PC-9 (cell line): ENCODE measurements at regions of chr1 and their contacts with region 1.

Region 1: GRCh38 chr1:189811960-189812359 is 665.7 kb downstream of the BRINP3 start:
- DNase-seq: no peak
- H3K4me3 ChIP-seq: no peak overlapping the region
- H3K27ac ChIP-seq: no peak overlapping the region
- H3K4me1 ChIP-seq: no peaks in the 10 kb centered on the region
- H3K27me3 ChIP-seq: no peaks in the 10 kb centered on the region
- CTCF ChIP-seq: no peak

Region 2: GRCh38 chr1:189289346-189289745 is 522.6 kb before region 1 on chr1:
- CTCF ChIA-PET with region 1: no interaction called
- POLR2A ChIA-PET with region 1: interaction called, 12 read pairs
- intact Hi-C with region 1: no loop called
- DNase-seq: no peak
- H3K4me3 ChIP-seq: no peak overlapping the region
- H3K27ac ChIP-seq: no peak overlapping the region
- H3K4me1 ChIP-seq: no peaks in the 10 kb centered on the region
- H3K27me3 ChIP-seq: no peaks in the 10 kb centered on the region
- CTCF ChIP-seq: no peak

Region 3: GRCh38 chr1:189847613-189848012 is 35.7 kb after region 1 on chr1:
- CTCF ChIA-PET with region 1: no interaction called
- POLR2A ChIA-PET with region 1: no interaction called
- intact Hi-C with region 1: no loop called
- DNase-seq: no peak
- H3K4me3 ChIP-seq: no peak overlapping the region
- H3K27ac ChIP-seq: no peak overlapping the region
- H3K4me1 ChIP-seq: no peaks in the 10 kb centered on the region
- H3K27me3 ChIP-seq: no peaks in the 10 kb centered on the region
- CTCF ChIP-seq: no peak